Transverse colon (tissue), 4 donors: ENCODE measurements at regions of chr16 and their contacts with region 1.

Region 1: DNA sequence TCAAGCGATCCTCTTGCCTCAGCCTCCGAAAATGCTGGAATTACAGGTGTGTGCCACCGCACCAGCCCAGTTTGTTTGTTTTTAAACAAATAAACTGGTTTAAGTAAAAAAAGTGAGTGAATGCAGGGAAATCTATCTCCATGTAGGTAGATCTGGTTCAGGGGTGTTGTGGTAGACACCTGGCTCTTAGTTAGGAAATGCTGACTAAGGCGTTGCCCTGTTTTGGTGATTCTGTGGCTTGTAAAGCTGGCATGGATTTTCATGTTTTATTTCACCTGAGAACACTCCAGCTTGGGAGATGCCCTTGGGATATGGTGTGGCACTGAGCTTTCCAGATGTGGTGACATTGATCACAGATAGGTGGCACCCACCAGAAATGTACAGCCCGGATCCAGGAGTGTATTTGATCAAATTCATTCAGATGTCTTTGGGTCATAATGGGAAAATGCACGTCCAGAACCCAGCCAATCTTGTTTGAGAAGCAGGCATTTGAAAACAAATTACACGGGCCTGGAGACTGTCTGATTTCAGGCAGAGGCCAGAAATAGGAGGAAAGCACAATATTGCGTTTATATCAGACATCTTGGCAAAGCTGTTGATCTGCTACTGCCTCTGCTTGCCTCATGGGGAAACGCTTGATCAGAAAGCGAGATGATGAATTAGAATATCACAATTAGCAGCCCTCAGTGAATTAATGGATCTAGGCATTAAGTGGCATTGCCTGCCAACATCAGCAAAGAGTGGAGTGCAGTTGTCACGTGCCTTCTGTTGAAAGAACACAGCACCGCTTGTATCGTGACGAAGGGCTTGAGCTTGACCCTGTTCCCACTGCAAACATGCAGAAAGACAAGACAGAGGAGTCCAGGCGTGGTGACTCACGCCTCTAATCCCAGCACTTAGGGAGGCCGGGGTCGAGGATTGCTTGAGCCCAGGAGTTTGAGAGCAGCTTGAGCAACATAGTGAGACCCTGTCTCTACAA is 7.3 kb upstream of the IL34 start:
- DNase-seq: peak; percentile 31
- H3K4me3 ChIP-seq: no peak overlapping the region
- H3K27ac ChIP-seq: peak overlapping the region in 3 of 4 donors; percentile 12 to 66 (median 16)
- H3K4me1 ChIP-seq: peaks cover 0 to 5% (median 2%) of the 10 kb centered on the region in 4 donors
- H3K27me3 ChIP-seq: no peaks in the 10 kb centered on the region
- CTCF ChIP-seq: no peak
- EP300 ChIP-seq: no peak
- POLR2A ChIP-seq: no peak

Region 2: GRCh38 chr16:70582290-70582978 is 56.7 kb before region 1 on chr16:
- in situ Hi-C with region 1: loop called in 1 of 4 experiments (anchors 10 kb)
- intact Hi-C with region 1: no loop called
- DNase-seq: no peak
- H3K4me3 ChIP-seq: no peak overlapping the region
- H3K27ac ChIP-seq: no peak overlapping the region
- H3K4me1 ChIP-seq: peaks cover 6 to 12% (median 7%) of the 10 kb centered on the region in 4 donors
- H3K27me3 ChIP-seq: no peaks in the 10 kb centered on the region
- CTCF ChIP-seq: no peak
- EP300 ChIP-seq: no peak
- POLR2A ChIP-seq: no peak

Region 3: DNA sequence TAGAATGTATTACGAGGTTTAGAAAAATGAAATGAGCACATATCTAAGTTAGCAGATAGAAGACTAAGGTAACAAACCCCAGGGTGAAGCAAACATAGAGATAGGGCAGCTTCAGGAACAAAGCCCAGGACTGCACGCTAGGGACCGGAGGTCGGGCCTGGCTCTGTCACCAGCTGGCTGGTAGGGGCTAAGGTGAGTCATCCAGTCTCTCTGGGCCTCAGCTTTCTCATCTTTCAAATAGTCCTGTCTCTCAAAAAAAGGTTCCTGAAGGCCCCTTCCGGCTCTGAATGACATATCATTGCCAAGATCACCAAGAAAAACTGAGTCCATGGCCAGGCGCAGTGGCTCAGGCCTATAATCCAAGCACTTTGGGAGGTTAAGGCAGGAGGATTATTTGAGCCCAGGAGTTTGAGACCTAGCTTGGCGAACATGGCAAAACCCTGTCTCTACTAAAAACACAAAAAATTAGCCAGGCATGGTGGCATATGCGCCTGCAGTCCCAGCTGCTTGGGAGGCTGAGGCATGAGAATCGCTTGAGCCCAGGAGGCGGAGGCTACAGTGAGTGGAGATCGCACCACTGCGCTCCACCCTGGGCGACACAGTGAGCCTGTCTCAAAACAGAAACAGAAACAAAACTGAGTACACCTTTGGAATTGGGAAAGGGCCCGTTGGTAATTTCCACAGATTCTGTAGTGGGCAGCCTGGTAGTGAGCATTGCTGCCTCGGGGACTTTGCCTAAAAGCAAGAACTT is 1335.1 kb after region 1 on chr16:
- in situ Hi-C with region 1: no loop called
- intact Hi-C with region 1: loop called (anchors 5 kb)
- DNase-seq: no peak
- H3K4me3 ChIP-seq: no peak overlapping the region
- H3K27ac ChIP-seq: no peak overlapping the region
- H3K4me1 ChIP-seq: no peaks in the 10 kb centered on the region
- H3K27me3 ChIP-seq: no peaks in the 10 kb centered on the region
- CTCF ChIP-seq: no peak
- EP300 ChIP-seq: no peak
- POLR2A ChIP-seq: no peak